ENCODE measurements at regions of chr7 and their contacts with region 1.

Region 1: GRCh38 chr7:107579885-107580715 is at the start of gene BCAP29:
- DNase-seq: peak; percentile 62 to 81
- H3K4me3 ChIP-seq: peak within 1 kb of the TSS; percentile 89
- H3K27ac ChIP-seq: peak within 1 kb of the TSS; percentile 69
- H3K4me1 ChIP-seq: peaks cover 25% of the 10 kb centered on the region
- H3K27me3 ChIP-seq: no peaks in the 10 kb centered on the region
- CTCF ChIP-seq: 0 out of 2 replicates have a peak, but pooled peaks have one; percentile 28
- total RNA-seq, gene BCAP29: 45.5 and 58.3 TPM in 2 replicates

Region 2: DNA sequence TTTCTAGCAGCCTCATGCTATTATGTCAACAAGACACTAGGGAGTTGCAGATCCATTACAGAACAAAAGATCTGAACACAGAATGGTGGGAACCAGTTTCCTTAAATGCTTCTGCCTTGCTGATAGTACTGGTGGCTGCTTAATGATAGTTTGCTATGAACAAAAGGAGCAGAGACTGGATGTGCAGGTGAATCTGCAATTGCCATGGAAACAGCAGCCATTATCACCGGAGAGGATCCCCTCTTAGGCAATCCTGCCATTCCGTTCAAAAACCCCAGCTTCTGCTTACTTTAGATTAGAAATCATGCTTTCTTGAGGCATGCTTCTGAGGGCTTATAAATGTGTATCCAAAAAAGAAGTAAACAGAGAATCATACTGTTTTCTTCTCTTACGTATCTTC is 615.6 kb before region 1 on chr7:
- CTCF ChIA-PET with region 1: no interaction called
- POLR2A ChIA-PET with region 1: no interaction called
- intact Hi-C with region 1: no loop called
- DNase-seq: no peak
- H3K4me3 ChIP-seq: no peak overlapping the region
- H3K27ac ChIP-seq: no peak overlapping the region
- H3K4me1 ChIP-seq: no peaks in the 10 kb centered on the region
- H3K27me3 ChIP-seq: no peaks in the 10 kb centered on the region
- CTCF ChIP-seq: no peak

Region 3: DNA sequence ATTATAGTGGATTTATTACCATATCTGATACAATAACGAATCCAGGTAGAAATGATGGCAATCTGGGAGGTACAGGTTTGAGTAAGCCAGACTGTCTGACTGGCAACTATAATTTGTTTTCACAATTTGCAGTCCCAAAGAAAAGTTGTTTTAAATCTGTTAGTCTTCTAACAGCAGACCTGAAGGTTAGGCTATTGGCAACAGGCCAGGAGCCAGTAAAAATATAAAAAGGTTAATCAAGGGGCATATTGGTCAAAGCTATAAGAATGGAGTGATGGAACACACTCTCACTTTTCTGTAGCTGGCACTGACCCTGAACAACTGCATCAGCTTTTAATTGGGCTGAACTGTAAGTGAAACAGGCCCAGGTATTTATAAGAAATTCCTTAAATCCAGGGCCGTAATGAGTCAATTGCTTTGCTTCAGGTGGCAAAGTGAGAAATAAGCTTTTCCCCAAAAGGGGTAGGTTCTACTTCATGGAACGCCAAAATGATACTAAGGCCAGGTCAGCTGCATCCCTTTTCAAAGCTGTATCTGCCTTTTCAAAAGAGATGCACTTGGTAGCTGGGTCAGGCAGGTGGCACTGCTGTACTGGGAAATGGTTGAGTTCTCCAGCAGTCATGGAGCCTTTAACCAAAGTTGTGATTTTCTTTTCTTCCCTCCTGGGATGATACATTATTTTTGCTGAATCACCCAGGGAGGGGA is 117.2 kb before region 1 on chr7:
- CTCF ChIA-PET with region 1: no interaction called
- POLR2A ChIA-PET with region 1: no interaction called
- intact Hi-C with region 1: loop called (anchors 5 kb)
- DNase-seq: peak; percentile 60 to 65
- H3K4me3 ChIP-seq: no peak overlapping the region
- H3K27ac ChIP-seq: no peak overlapping the region
- H3K4me1 ChIP-seq: peaks cover 8% of the 10 kb centered on the region
- H3K27me3 ChIP-seq: no peaks in the 10 kb centered on the region
- CTCF ChIP-seq: peak; percentile 90

Region 4: DNA sequence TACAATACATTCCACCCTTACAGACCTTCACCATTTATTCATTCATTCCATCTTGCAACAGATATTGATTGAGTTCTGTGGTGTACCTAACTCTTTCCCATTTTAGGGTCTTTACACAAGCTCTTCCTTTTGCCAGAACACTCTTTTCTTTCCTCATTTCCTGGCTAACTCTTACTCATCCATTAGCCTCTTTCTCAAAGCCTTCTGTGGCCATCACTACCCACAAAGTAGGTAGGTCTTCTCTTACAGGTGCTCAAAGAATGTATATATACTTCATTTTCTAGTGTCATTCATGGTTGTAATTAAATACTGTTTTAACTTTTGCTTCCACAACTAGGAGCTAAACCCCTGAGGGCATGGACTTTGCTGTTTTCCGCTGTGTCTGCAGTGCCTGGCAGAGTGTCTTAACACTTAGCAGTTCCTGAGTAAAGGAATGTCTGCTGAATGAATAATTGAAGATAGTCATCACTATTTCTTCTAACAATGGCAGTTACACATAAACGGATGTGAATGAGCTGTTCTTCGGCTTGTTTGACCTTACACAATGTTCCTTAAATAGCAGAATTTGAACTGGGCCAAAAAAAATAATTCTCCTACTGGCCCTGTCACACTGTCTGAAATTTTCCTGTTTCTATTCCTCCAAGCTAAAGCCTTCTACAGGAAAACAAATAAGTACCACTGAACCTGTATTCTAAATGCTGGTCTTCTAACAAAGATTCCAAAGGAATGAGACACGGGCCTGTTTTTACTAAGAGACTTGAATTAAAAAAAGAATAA is 15.0 kb after region 1 on chr7:
- CTCF ChIA-PET with region 1: no interaction called
- POLR2A ChIA-PET with region 1: no interaction called
- intact Hi-C with region 1: loop called (anchors 2 kb)
- DNase-seq: peak; percentile 73 to 97
- H3K4me3 ChIP-seq: no peak overlapping the region
- H3K27ac ChIP-seq: peak overlapping the region; percentile 84
- H3K4me1 ChIP-seq: peaks cover 39% of the 10 kb centered on the region
- H3K27me3 ChIP-seq: no peaks in the 10 kb centered on the region
- CTCF ChIP-seq: no peak

Region 5: GRCh38 chr7:107609811-107610261 is 29.7 kb after region 1 on chr7:
- CTCF ChIA-PET with region 1: no interaction called
- POLR2A ChIA-PET with region 1: interaction called, 11 read pairs
- intact Hi-C with region 1: no loop called
- DNase-seq: no peak
- H3K4me3 ChIP-seq: no peak overlapping the region
- H3K27ac ChIP-seq: no peak overlapping the region
- H3K4me1 ChIP-seq: peaks cover 23% of the 10 kb centered on the region
- H3K27me3 ChIP-seq: no peaks in the 10 kb centered on the region
- CTCF ChIP-seq: no peak

Region 6: DNA sequence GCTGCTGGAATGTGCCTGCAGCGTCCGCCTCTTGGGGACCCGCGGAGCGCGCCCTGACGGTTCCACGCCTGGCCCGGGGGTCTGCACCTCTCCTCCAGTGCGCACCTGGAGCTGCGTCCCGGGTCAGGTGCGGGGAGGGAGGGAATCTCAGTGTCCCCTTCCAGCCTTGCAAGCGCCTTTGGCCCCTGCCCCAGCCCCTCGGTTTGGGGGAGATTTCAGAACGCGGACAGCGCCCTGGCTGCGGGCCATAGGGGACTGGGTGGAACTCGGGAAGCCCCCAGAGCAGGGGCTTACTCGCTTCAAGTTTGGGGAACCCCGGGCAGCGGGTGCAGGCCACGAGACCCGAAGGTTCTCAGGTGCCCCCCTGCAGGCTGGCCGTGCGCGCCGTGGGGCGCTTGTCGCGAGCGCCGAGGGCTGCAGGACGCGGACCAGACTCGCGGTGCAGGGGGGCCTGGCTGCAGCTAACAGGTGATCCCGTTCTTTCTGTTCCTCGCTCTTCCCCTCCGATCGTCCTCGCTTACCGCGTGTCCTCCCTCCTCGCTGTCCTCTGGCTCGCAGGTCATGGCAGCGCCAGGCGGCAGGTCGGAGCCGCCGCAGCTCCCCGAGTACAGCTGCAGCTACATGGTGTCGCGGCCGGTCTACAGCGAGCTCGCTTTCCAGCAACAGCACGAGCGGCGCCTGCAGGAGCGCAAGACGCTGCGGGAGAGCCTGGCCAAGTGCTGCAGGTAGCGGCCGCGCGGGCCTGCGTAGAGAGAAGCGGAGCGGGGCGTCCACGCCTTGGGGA is 81.2 kb after region 1 on chr7:
- CTCF ChIA-PET with region 1: no interaction called
- POLR2A ChIA-PET with region 1: no interaction called
- intact Hi-C with region 1: loop called (anchors 5 kb)
- DNase-seq: peak; percentile 40 to 69
- H3K4me3 ChIP-seq: peak overlapping the region; percentile 58
- H3K27ac ChIP-seq: no peak overlapping the region
- H3K4me1 ChIP-seq: peaks cover 4% of the 10 kb centered on the region; the same call in 1 of the 2 replicates
- H3K27me3 ChIP-seq: no peaks in the 10 kb centered on the region
- CTCF ChIP-seq: no peak

Region 7: DNA sequence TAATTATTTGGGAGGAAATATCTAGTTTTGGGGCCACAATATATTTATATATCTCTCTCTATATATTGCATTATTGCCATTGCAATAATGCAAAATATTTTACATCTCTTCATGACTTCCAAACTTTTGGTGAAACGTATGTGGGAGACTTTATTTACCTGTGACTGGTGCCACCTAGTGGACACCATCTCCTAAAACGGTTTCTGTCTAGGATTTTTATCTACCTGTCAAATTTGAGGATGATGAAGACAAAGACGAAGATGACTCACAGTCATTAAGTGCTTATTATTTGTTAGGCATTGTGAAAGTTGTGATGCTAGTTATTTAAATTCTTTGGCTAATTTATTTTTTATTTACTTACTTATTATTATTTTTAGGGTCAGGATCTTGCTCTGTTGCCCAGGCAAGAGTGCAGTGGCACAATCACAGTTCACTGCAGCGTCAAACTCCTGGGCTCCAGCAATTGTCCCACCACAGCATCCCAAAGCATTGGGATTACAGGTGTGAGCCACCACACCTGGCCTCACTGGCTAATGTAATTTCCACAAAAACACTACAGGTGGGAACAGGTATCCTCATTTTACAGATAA is 145.1 kb after region 1 on chr7:
- CTCF ChIA-PET with region 1: no interaction called
- POLR2A ChIA-PET with region 1: no interaction called
- intact Hi-C with region 1: loop called (anchors 1 kb)
- DNase-seq: peak; percentile 45 to 73
- H3K4me3 ChIP-seq: no peak overlapping the region
- H3K27ac ChIP-seq: no peak overlapping the region
- H3K4me1 ChIP-seq: no peaks in the 10 kb centered on the region
- H3K27me3 ChIP-seq: no peaks in the 10 kb centered on the region
- CTCF ChIP-seq: peak; percentile 86